ENCODE measurements at regions of chr1 and their contacts with region 1.

Region 1: DNA sequence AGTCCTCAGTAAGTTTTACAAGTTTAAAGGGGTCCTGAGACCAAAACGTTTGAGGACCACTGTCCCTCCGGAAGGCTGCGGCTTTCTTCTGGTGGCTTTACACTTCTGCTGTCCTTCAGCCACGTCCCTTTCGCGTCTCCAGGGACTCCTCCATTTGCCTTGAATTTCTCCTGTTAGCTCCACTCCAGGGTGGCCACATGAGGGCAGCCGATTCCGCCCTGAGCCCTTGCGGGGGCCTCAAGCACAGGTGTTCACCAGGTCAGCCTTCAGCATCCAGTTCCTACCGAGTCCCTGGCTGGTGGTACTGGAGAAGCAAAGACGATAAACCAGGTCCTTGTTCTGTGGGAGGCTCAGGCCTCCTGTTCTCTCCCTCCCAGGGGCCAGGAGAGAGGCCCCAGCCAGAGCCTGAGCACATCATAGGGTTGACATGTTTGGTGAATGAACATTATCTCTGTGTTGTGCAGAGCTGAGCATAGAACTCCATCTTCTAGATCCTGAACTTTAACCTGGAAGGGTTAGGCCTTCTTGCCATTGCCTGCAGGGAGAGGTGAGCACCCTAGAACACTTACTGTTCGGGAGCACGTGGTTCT is 27.4 kb upstream of the COQ8A start:
- DNase-seq: peak; percentile 82
- H3K4me3 Mint-ChIP-seq: no peak overlapping the region
- H3K27ac Mint-ChIP-seq: no peak overlapping the region
- H3K4me1 Mint-ChIP-seq: no peaks in the 10 kb centered on the region
- H3K27me3 Mint-ChIP-seq: no peaks in the 10 kb centered on the region
- CTCF ChIP-seq: peak; percentile 69

Region 2: GRCh38 chr1:227102056-227102455 is 189.4 kb after region 1 on chr1:
- CTCF ChIA-PET with region 1: no interaction called
- intact Hi-C with region 1: no loop called
- DNase-seq: no peak
- H3K4me3 Mint-ChIP-seq: no peak overlapping the region
- H3K27ac Mint-ChIP-seq: no peak overlapping the region
- H3K4me1 Mint-ChIP-seq: peaks cover 17% of the 10 kb centered on the region
- H3K27me3 Mint-ChIP-seq: no peaks in the 10 kb centered on the region
- CTCF ChIP-seq: no peak

Region 3: DNA sequence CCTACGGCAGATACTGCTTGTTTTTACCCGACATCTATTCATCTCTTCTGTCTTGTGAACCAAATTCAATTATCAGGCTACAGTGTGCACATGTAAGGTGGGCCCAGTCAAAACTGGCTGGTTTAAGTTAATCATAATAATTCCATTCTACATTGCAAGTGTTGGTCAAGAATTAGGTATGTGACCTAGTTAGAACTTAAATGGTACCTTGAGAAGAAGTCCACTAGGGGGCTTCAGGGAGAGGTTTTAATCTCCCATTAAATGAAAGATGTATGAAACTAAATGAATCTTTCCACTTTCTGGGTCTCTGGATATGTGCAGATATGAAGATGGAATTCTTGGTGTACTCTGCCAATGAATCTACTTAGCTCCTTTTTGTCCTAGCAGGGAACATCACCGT is 218.5 kb after region 1 on chr1:
- CTCF ChIA-PET with region 1: no interaction called
- intact Hi-C with region 1: loop called (anchors 10 kb)
- DNase-seq: no peak
- H3K4me3 Mint-ChIP-seq: no peak overlapping the region
- H3K27ac Mint-ChIP-seq: no peak overlapping the region
- H3K4me1 Mint-ChIP-seq: peaks cover 6% of the 10 kb centered on the region
- H3K27me3 Mint-ChIP-seq: no peaks in the 10 kb centered on the region
- CTCF ChIP-seq: peak; percentile 30

Measured in Calu3 (cell line).